Psoas muscle (tissue), 8 donors: ENCODE measurements at regions of chr20 and their contacts with region 1.

Region 1: GRCh38 chr20:44457016-44457415 is 18.7 kb upstream of the TTPAL start:
- DNase-seq: no peak
- ATAC-seq: no peak
- H3K4me3 ChIP-seq: no peak overlapping the region
- H3K27ac ChIP-seq: no peak overlapping the region
- H3K4me1 ChIP-seq: no peaks in the 10 kb centered on the region
- H3K27me3 ChIP-seq: no peaks in the 10 kb centered on the region
- CTCF ChIP-seq: no peak

Region 2: DNA sequence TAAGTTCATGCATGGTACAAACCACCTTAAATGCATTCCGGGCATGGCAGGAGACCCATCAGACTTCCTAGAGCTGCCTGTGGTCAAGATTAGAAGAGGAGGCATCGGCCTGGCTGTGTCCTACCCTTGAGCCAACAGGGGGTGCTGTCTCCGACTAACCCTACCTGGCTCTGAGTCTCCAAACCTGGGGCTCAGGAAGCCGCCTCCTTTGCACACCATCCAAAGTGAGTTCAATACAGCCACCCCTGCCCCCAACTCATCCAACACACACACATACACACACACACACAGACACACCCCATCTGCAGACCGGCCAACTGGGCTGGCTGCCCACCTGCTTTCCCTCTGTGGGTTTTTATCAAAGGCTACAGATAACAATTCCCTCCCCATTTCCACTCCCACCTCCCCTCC is 347.1 kb before region 1 on chr20:
- intact Hi-C with region 1: no loop called
- DNase-seq: no peak
- ATAC-seq: peak in 2 of 4 donors; percentile 11 to 31
- H3K4me3 ChIP-seq: no peak overlapping the region
- H3K27ac ChIP-seq: no peak overlapping the region
- H3K4me1 ChIP-seq: peaks cover 4% of the 10 kb centered on the region
- H3K27me3 ChIP-seq: no peaks in the 10 kb centered on the region
- CTCF ChIP-seq: no peak

Region 3: GRCh38 chr20:44355498-44356352 is 101.3 kb before region 1 on chr20 and contains the start of gene HNF4A:
- intact Hi-C with region 1: no loop called
- DNase-seq: no peak
- ATAC-seq: no peak
- H3K4me3 ChIP-seq: no peak within 1 kb of the TSS
- H3K27ac ChIP-seq: no peak within 1 kb of the TSS
- H3K4me1 ChIP-seq: no peaks in the 10 kb centered on the region
- H3K27me3 ChIP-seq: peaks cover 0 to 17% (median 0%) of the 10 kb centered on the region in 3 donors
- CTCF ChIP-seq: no peak
- total RNA-seq, gene HNF4A: 0.13 TPM in 1 of 4 donors, not detected in the others

Region 4: DNA sequence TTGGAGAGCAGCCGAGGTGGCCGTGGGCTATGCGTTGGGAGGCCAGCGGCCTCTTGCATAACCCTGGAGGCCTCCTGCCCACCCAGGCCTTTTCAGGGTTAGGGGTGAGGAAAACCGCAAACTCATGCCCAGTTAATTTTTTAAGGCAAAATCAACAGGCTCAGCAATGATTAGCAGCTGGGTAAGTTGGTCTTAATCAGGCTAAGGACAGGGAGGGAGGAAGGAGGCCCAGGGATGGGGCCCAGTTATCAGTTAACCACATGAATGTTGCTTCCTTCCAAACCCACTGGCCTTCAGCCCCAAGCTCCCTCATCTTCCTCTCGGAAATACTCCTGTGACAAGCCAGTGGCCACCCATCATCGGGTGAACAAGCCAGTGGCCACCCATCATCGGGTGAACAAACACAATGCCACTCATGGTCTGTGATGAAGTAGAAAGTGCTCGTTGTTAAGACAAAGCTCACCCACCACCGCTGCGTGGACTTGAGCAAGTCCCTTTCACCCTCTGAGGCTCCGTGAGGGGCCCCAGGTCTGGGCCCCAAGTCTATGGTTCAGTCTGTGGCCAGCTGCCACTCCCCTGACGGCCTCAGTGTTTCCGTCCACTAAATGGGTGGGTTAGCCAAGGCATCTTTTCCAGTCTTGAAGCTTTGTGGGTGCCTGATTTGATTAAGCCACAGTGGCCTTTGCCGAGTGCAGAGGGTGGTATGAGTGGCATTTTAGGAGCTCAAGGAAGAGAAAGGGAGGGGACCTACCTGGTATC is 62.1 kb before region 1 on chr20:
- intact Hi-C with region 1: loop called in 1 of 2 experiments (anchors 5 kb)
- DNase-seq: no peak
- ATAC-seq: no peak
- H3K4me3 ChIP-seq: no peak overlapping the region
- H3K27ac ChIP-seq: no peak overlapping the region
- H3K4me1 ChIP-seq: no peaks in the 10 kb centered on the region
- H3K27me3 ChIP-seq: peaks cover 0 to 5% (median 4%) of the 10 kb centered on the region in 3 donors
- CTCF ChIP-seq: no peak